GM18951 (cell line): ENCODE measurements at regions of chr16 and their contacts with region 1.

Region 1: GRCh38 chr16:58000706-58001676 is at the start of gene USB1:
- POLR2A ChIP-seq: peak; percentile 92

Region 2: DNA sequence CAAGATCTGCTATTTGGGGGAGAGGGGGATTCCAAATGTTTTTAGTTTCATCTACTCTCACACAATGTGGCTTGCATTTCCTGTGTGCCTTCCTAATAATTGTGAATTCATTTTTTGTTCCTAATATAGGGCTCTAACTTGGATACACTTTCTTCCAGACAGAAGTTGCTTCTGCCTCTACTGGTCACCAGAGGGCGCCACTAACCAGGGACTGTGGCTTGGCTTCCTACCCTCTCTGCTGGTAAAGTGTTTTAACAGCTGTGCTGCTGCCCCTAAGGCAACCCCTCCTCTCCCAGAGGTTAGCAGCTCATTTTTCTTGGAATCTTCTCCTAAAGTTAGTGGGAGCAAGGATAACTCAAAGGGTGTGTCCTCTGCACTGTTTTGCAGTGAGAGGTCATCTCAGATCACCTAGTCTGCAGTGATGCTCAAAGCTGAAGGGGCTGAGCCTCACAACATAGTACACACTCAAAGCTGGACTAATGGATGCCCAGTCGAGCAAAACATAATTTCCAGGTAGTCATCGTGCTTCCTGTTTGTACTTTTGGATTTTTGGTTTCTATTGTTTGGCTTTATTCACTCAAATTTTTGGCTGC is 298.9 kb after region 1 on chr16:
- in situ Hi-C with region 1: loop called (anchors 25 kb)
- POLR2A ChIP-seq: no peak

Region 3: GRCh38 chr16:58494981-58495520 is 494.1 kb after region 1 on chr16:
- in situ Hi-C with region 1: loop called (anchors 25 kb)
- POLR2A ChIP-seq: no peak